Naive thymus-derived CD4-positive, alpha-beta T cell (primary cell): ENCODE measurements at regions of chr1 and their contacts with region 1.

Region 1: DNA sequence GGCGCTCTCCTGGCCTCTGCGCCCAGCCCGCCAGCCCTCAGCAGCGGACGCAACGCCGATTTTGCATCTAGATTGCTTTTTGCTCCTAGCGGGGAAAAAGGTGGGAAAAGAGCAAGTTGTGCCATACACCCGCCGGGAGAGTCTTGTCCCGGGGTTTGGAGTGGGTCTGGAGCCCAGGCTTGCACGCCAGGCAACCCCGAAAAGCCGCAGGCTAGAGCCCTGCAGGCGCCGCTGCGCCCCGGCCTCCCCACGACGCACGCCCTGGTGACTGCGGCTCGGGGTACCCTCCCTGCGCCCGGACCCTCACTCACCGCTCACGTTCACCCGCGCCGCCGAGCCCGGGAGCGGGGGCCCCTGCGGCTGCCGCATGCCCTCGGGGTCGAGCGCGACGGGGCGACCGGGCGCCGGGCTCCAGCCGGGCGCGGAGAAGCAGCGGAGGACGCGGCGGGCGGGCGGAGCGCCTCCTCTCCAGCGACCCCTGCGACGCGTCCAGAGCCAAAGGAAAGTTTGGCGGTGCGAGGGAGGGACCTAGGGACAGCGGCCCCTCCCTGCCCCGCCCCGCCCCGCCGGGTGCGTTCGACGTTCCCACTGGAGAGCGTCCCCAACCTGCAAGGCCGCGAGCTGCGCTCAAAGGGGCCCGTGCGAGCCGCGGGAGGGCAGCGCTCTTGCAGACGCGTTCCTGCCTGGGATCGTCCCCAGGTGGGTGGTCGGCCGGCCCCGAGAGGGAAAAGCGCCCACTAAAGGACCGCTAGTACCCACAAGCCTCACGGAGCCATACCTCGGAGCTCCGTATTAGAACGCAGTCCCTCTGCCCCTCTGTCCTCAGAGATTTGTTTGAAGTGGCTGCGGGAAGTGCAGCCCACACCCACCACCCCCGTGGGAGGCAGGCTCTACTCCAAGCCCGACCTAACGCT is at the start of gene LPAR3:
- DNase-seq: peak in 4 of 9 donors; percentile 11 to 25 (median 16)
- ATAC-seq: peak; percentile 57
- H3K4me3 ChIP-seq: peak within 1 kb of the TSS; percentile 54
- H3K4me3 Mint-ChIP-seq: peak within 1 kb of the TSS; percentile 66 to 86 (median 82)
- H3K27ac ChIP-seq: no peak within 1 kb of the TSS
- H3K27ac Mint-ChIP-seq: peak within 1 kb of the TSS in 1 of 9 donors; percentile 26
- H3K4me1 ChIP-seq: peaks cover 0 to 3% of the 10 kb centered on the region in 2 donors
- H3K4me1 Mint-ChIP-seq: peaks cover 13 to 37% (median 27%) of the 10 kb centered on the region in 7 donors
- H3K27me3 ChIP-seq: peaks cover 8% of the 10 kb centered on the region in 2 donors
- H3K27me3 Mint-ChIP-seq: peaks cover 26 to 57% (median 27%) of the 10 kb centered on the region in 5 donors
- total RNA-seq, gene LPAR3: 0.29 to 1.1 (median 0.97) TPM

Region 2: DNA sequence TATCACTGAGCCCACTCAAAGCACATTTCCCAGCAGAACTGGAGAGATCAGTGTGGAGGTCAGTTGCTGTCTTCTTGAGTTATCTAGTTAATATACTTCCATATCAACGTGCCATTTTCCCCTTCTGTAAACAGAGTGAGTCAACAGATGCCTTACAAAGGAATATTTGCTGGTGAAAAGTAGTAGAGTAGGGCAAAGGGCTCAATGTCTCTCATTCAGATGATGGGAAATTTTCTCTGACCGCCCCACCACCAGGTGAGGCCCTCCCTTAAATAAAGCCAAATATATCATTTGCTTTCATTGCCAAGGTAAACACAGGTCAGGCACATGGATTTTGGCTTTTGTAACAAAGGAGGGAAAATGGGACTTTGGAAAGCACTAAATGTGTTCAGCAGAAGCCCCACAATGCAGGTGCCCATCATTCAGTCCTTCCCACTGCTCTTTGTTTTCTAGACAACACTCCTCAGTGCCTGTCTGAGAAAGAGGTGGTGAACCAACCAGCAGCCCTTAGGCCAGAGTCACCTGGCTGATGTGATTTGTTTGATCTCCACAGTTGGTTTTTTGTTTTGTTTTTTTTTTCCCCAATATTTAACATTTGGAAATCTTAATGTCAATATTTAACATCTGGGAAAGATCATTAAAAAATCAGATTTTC is 632.0 kb before region 1 on chr1:
- CTCF ChIA-PET with region 1: no interaction called
- POLR2A ChIA-PET with region 1: no interaction called
- intact Hi-C with region 1: no loop called
- DNase-seq: no peak
- ATAC-seq: no peak
- H3K4me3 ChIP-seq: no peak overlapping the region
- H3K4me3 Mint-ChIP-seq: no peak overlapping the region
- H3K27ac ChIP-seq: no peak overlapping the region
- H3K27ac Mint-ChIP-seq: no peak overlapping the region
- H3K4me1 ChIP-seq: no peaks in the 10 kb centered on the region
- H3K4me1 Mint-ChIP-seq: no peaks in the 10 kb centered on the region
- H3K27me3 ChIP-seq: no peaks in the 10 kb centered on the region
- H3K27me3 Mint-ChIP-seq: no peaks in the 10 kb centered on the region

Region 3: DNA sequence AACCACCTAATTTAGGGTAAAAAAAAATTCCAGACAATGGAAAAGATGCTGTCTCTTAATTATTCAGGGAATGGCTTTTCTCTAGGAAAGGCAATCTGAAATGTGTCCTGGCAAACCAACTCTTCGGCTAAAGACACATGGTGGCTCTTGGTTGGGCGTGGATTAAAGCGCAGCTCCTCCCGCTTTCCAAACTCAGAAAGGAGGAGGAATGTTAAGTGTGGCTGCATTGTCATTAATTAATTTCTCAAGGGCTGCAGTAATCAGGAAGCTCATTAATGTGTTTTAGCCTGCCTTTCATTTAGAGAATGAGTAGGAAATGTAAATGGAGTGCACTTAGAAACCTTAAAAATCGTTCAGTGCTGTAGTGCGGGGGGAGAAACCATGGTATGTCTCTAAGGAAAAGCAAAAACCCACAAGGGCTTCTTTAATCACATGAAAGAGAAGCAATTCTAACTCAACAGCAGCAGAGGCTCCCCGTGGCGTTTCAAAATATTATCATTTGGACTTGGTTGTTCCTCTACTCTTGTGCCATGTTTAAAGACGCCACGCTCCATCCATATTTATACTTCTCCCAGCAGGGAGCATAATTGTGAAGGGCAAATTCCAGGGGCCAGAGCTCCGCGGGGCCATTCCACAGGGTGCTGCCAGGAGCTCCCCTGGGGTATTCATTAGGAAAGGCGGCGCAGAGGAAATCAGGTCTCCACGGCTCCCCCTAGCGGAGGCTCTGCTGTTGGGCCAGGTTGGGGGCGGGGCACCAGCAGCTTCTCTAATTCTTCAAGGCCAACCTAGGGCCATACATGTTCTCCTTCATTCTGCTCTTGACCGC is 110.8 kb before region 1 on chr1:
- CTCF ChIA-PET with region 1: no interaction called
- POLR2A ChIA-PET with region 1: no interaction called
- intact Hi-C with region 1: loop called in 1 of 2 experiments (anchors 5 kb)
- DNase-seq: peak; percentile 63 to 82 (median 75)
- ATAC-seq: peak; percentile 93
- H3K4me3 ChIP-seq: peak overlapping the region; percentile 23
- H3K4me3 Mint-ChIP-seq: peak overlapping the region; percentile 60 to 89 (median 84)
- H3K27ac ChIP-seq: peak overlapping the region; percentile 26
- H3K27ac Mint-ChIP-seq: peak overlapping the region in 8 of 9 donors; percentile 48 to 88 (median 78)
- H3K4me1 ChIP-seq: peaks cover 0 to 14% of the 10 kb centered on the region in 2 donors
- H3K4me1 Mint-ChIP-seq: peaks cover 17 to 35% (median 30%) of the 10 kb centered on the region in 7 donors
- H3K27me3 ChIP-seq: no peaks in the 10 kb centered on the region
- H3K27me3 Mint-ChIP-seq: peaks cover 0 to 7% (median 0%) of the 10 kb centered on the region in 5 donors

Region 4: DNA sequence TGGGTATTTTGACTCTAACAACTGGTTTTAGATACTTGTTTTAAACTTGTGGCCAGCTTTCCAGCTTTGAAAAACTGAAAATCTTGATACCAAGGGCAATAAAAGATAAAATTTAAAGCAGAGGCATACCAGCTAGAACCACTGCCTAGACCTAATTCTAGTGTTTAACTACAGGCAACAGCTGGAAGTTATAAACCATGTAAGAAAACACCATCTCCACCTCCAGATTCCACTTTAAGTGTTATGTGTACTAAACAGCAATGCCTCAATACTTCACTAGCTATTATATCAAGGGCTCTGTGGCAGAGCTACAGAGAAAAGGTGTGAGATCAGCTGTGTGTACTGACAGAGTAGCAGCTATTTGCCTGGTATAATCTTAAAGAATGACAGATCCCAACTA is 69.5 kb before region 1 on chr1:
- CTCF ChIA-PET with region 1: no interaction called
- POLR2A ChIA-PET with region 1: no interaction called
- intact Hi-C with region 1: loop called in 1 of 2 experiments (anchors 5 kb)
- DNase-seq: no peak
- ATAC-seq: no peak
- H3K4me3 ChIP-seq: no peak overlapping the region
- H3K4me3 Mint-ChIP-seq: no peak overlapping the region
- H3K27ac ChIP-seq: no peak overlapping the region
- H3K27ac Mint-ChIP-seq: no peak overlapping the region
- H3K4me1 ChIP-seq: no peaks in the 10 kb centered on the region
- H3K4me1 Mint-ChIP-seq: peaks cover 4 to 27% (median 15%) of the 10 kb centered on the region in 7 donors
- H3K27me3 ChIP-seq: no peaks in the 10 kb centered on the region
- H3K27me3 Mint-ChIP-seq: peaks cover 0 to 23% (median 0%) of the 10 kb centered on the region in 5 donors

Region 5: GRCh38 chr1:84847253-84848250 is 45.4 kb before region 1 on chr1:
- CTCF ChIA-PET with region 1: no interaction called
- POLR2A ChIA-PET with region 1: no interaction called
- intact Hi-C with region 1: loop called in 1 of 2 experiments (anchors 5 kb)
- DNase-seq: no peak
- ATAC-seq: peak; percentile 40
- H3K4me3 ChIP-seq: no peak overlapping the region
- H3K4me3 Mint-ChIP-seq: peak overlapping the region in 4 of 10 donors; percentile 11 to 25 (median 17)
- H3K27ac ChIP-seq: no peak overlapping the region
- H3K27ac Mint-ChIP-seq: peak overlapping the region in 4 of 9 donors; percentile 25 to 79 (median 42)
- H3K4me1 ChIP-seq: peaks cover 6 to 10% of the 10 kb centered on the region in 2 donors
- H3K4me1 Mint-ChIP-seq: peaks cover 5 to 25% (median 19%) of the 10 kb centered on the region in 7 donors
- H3K27me3 ChIP-seq: no peaks in the 10 kb centered on the region
- H3K27me3 Mint-ChIP-seq: peaks cover 0 to 19% (median 0%) of the 10 kb centered on the region in 5 donors

Region 6: DNA sequence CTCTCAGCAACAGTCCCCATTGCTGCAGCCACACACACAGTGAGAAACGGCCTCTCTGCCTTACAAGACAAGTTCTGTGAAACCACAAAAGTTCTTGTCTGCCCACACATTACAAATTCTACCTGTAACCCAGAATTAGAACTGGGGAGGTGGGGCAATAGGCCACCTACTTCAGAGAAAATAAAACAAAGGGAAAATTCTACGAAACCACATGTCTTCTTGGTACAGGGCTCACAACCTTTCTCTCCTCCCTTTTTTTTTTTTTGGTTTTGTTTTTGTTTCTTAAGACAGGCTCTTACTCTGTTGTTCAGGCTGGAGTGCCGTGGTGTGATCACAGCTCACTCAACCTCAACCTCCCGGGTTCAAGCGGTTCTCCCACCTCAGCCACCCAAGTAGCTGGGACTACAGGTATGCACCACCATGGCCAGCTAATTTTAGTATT is 30.1 kb before region 1 on chr1:
- CTCF ChIA-PET with region 1: no interaction called
- POLR2A ChIA-PET with region 1: no interaction called
- intact Hi-C with region 1: loop called in 1 of 2 experiments (anchors 2 kb)
- DNase-seq: peak in 8 of 9 donors; percentile 42 to 81 (median 66)
- ATAC-seq: peak; percentile 87
- H3K4me3 ChIP-seq: peak overlapping the region; percentile 44
- H3K4me3 Mint-ChIP-seq: peak overlapping the region; percentile 71 to 89 (median 83)
- H3K27ac ChIP-seq: peak overlapping the region; percentile 67
- H3K27ac Mint-ChIP-seq: peak overlapping the region; percentile 83 to 95 (median 92)
- H3K4me1 ChIP-seq: peaks cover 30 to 46% of the 10 kb centered on the region in 2 donors
- H3K4me1 Mint-ChIP-seq: peaks cover 31 to 69% (median 59%) of the 10 kb centered on the region in 7 donors
- H3K27me3 ChIP-seq: no peaks in the 10 kb centered on the region
- H3K27me3 Mint-ChIP-seq: peaks cover 0 to 6% (median 0%) of the 10 kb centered on the region in 5 donors

Region 7: DNA sequence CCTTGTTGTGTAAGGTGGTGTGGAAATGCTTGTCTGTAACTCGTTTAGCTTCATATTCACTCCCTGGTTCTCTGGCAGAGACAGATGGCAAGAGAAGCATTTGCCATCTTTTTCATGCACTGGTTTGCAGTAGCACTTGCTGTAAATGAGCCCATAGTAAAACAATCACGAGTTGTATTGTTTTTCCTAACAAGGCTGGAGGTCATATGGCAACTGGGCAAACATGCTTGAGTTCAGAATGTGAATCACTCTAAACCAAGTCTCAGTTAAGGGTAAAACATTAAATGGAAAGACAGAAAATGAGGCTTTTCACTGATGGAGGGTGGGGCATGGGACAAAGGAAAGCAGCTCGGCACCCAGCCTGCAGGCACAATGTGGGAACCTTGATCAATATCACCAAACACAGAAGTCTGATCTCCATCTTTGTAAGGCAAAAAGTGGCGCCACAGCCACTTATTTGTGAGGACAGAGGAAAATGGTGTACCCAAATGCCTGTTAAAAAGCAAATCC is 26.6 kb after region 1 on chr1:
- CTCF ChIA-PET with region 1: no interaction called
- POLR2A ChIA-PET with region 1: no interaction called
- intact Hi-C with region 1: no loop called
- DNase-seq: no peak
- ATAC-seq: no peak
- H3K4me3 ChIP-seq: no peak overlapping the region
- H3K4me3 Mint-ChIP-seq: no peak overlapping the region
- H3K27ac ChIP-seq: no peak overlapping the region
- H3K27ac Mint-ChIP-seq: no peak overlapping the region
- H3K4me1 ChIP-seq: no peaks in the 10 kb centered on the region
- H3K4me1 Mint-ChIP-seq: peaks cover 0 to 2% (median 0%) of the 10 kb centered on the region in 7 donors
- H3K27me3 ChIP-seq: no peaks in the 10 kb centered on the region
- H3K27me3 Mint-ChIP-seq: peaks cover 0 to 18% (median 5%) of the 10 kb centered on the region in 5 donors